ENCODE measurements at regions of chr4 and their contacts with region 1.

Region 1: GRCh38 chr4:169010125-169011023 is at the start of gene CBR4:
- DNase-seq: peak; percentile 96
- ATAC-seq: peak; percentile 98
- H3K4me3 ChIP-seq: peak within 1 kb of the TSS; percentile 74 to 82
- H3K27ac ChIP-seq: peak within 1 kb of the TSS; percentile 69
- H3K4me1 ChIP-seq: peaks cover 11 to 19% of the 10 kb centered on the region in 2 experiments; a peak in 3 of 4 replicates
- H3K27me3 ChIP-seq: no peaks in the 10 kb centered on the region
- CTCF ChIP-seq: peak in 2 of 3 experiments; percentile 14 to 18; a peak in 3 of 6 replicates
- POLR2A ChIP-seq: peak; percentile 86
- RAD21 ChIP-seq: no peak
- total RNA-seq, gene CBR4: 32.3 TPM

Region 2: GRCh38 chr4:168183717-168184608 is 826.4 kb before region 1 on chr4:
- CTCF ChIA-PET with region 1: no interaction called
- POLR2A ChIA-PET with region 1: no interaction called
- RAD21 ChIA-PET with region 1: no interaction called
- intact Hi-C with region 1: loop called (anchors 5 kb)
- DNase-seq: peak; percentile 43
- ATAC-seq: peak; percentile 68
- H3K4me3 ChIP-seq: no peak overlapping the region
- H3K27ac ChIP-seq: peak overlapping the region; percentile 52; the same call in 1 of the 2 replicates
- H3K4me1 ChIP-seq: peaks cover 0 to 6% of the 10 kb centered on the region in 2 experiments; a peak in 2 of 4 replicates
- H3K27me3 ChIP-seq: no peaks in the 10 kb centered on the region
- CTCF ChIP-seq: peak; percentile 46 to 80 (median 73)
- POLR2A ChIP-seq: no peak
- RAD21 ChIP-seq: peak; percentile 90

Region 3: GRCh38 chr4:168999809-169000208 is 10.6 kb before region 1 on chr4:
- CTCF ChIA-PET with region 1: interaction called, 10 read pairs
- POLR2A ChIA-PET with region 1: interaction called, 3 read pairs
- RAD21 ChIA-PET with region 1: no interaction called
- intact Hi-C with region 1: no loop called
- DNase-seq: no peak
- ATAC-seq: no peak
- H3K4me3 ChIP-seq: no peak overlapping the region
- H3K27ac ChIP-seq: no peak overlapping the region
- H3K4me1 ChIP-seq: no peaks in the 10 kb centered on the region
- H3K27me3 ChIP-seq: no peaks in the 10 kb centered on the region
- CTCF ChIP-seq: no peak
- POLR2A ChIP-seq: no peak
- RAD21 ChIP-seq: no peak

Region 4: DNA sequence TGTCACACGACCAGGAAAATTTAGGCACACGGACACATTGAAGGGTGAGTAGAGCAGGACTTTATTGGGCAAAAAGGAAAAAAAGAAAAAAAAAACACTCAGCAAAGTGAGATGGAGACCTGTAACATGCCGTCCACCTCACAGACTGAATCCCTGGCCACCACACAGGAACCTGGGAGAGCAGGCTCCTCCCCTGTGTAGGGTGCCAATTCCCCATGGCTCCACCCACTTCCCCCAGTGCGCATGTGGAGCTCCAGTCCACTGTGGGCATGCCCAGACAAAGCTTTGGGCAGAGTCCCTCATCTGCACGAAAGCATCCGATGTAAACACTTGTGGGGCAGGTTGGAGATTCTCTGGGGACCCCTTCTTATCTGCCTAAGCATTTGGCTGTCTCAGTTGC is 23.3 kb after region 1 on chr4:
- CTCF ChIA-PET with region 1: interaction called, 6 read pairs
- POLR2A ChIA-PET with region 1: interaction called, 11 read pairs
- RAD21 ChIA-PET with region 1: no interaction called
- intact Hi-C with region 1: no loop called
- DNase-seq: peak; percentile 62
- ATAC-seq: peak; percentile 94
- H3K4me3 ChIP-seq: peak overlapping the region in 1 of 2 experiments; percentile 14; a peak in 1 of 4 replicates
- H3K27ac ChIP-seq: peak overlapping the region; percentile 43; the same call in 1 of the 2 replicates
- H3K4me1 ChIP-seq: peaks cover 15 to 59% of the 10 kb centered on the region in 2 experiments; a peak in 3 of 4 replicates
- H3K27me3 ChIP-seq: no peaks in the 10 kb centered on the region
- CTCF ChIP-seq: no peak
- POLR2A ChIP-seq: no peak
- RAD21 ChIP-seq: no peak

Region 5: DNA sequence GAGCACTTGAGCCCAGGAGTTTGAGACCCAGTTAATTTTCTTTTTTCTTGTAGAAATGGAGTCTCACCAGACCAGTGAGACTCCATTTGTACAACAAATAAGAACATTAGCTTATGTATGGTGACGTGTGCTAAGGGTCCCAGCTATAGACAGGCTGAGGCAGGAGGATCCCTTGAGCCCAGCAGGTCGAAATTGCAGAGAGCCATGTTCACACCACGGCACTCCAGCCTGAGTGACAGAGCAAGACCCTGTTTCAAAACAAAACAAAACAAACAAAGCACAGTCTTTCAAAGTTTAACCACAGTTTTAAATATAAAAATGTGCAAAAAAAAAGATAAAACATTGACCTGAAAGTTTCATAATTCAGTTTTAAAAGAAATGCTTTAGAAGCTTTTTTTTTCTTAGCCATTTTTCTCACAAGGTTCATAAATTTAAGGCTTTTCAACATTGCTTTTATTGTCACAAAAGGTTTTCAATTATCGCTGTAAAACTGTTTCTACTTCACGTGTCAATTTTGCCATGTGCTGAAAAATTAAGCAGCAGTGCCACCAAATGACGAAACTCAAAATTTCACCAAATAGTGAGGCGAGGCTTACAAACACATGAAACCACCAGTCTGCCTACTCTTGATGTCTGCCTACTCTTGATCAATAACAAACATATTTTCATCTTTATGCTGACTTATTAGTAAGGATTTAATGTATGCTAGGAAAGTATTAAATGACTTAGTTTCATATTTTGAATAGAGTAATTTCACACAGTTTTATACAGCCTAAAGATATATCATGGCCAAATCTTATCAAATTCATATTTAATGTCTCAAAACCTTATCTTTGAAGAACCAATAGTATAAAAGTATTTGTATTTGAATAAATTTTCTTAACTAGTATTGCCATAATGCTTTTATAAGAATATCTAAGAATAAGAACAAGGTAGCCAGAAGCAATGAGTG is 475.7 kb after region 1 on chr4:
- CTCF ChIA-PET with region 1: interaction called, 10 read pairs
- POLR2A ChIA-PET with region 1: interaction called, 3 read pairs
- RAD21 ChIA-PET with region 1: no interaction called
- intact Hi-C with region 1: no loop called
- DNase-seq: peak; percentile 49
- ATAC-seq: peak; percentile 74
- H3K4me3 ChIP-seq: no peak overlapping the region
- H3K27ac ChIP-seq: no peak overlapping the region
- H3K4me1 ChIP-seq: 0 out of 4 replicates have a peak, but pooled peaks cover 0 to 3% of the 10 kb centered on the region in 2 experiments
- H3K27me3 ChIP-seq: no peaks in the 10 kb centered on the region
- CTCF ChIP-seq: peak; percentile 26 to 71 (median 69); a peak in 4 of 6 replicates
- POLR2A ChIP-seq: no peak
- RAD21 ChIP-seq: peak; percentile 90